ENCODE measurements at regions of chr17 and their contacts with region 1.

Region 1: DNA sequence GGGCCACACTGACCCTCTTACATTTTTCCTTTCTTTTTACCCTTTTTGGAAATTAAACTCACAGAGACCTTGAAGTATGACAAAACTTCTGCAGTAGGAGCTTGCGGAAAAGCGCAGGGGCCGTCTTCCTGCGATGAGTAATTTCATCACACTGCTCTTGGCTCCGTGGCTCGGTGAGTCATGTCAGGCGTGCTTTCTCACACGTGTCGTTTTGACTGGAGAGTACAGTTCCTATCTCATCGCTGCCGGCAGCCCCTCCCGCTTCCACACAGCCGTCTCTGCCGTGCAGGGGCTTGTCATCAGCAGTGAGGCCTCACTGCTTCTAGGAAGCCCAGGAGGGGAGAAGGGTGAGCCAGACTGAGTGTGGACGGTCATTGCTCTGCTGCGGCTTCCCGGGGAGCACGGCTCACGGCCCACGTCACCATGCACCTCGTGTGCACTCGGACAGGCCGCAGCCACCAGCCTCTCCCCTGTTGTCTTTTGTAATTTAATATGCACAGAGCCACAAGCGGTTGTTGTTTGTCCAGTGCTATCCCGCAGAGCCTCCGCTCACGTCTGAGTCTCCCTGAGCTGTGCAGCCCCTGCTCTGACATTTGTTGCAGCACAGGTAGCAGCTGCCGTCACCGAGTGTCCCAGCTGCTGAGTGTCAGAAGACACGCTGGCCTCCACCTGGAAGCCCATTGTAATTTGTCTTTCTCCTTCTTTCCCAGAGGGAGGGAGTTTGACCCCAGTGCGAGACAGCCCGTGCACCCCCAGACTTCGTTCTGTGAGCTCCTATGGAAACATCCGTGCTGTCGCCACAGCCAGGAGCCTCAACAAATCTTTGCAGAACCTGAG is 99.4 kb upstream of the CHMP6 start:
- DNase-seq: peak; percentile 98
- H3K4me3 ChIP-seq: peak overlapping the region in 2 of 3 experiments; percentile 10 to 18
- H3K27ac ChIP-seq: peak overlapping the region; percentile 89
- H3K4me1 ChIP-seq: peaks cover 36% of the 10 kb centered on the region
- H3K27me3 ChIP-seq: no peaks in the 10 kb centered on the region
- CTCF ChIP-seq: no peak

Region 2: GRCh38 chr17:80855948-80856862 is 36.0 kb before region 1 on chr17:
- CTCF ChIA-PET with region 1: no interaction called
- dilution Hi-C with region 1: loop called (anchors 5 kb)
- in situ Hi-C with region 1: no loop called
- intact Hi-C with region 1: loop called (anchors 5 kb)
- DNase-seq: peak; percentile 98
- H3K4me3 ChIP-seq: no peak overlapping the region
- H3K27ac ChIP-seq: peak overlapping the region; percentile 99
- H3K4me1 ChIP-seq: peaks cover 61% of the 10 kb centered on the region
- H3K27me3 ChIP-seq: no peaks in the 10 kb centered on the region
- CTCF ChIP-seq: no peak

Measured in mammary epithelial cell (primary cell).